ENCODE measurements at regions of chr10 and their contacts with region 1.

Region 1: GRCh38 chr10:106711313-106711906 is 453.1 kb downstream of the SORCS1 start:
- DNase-seq: no peak
- ATAC-seq: peak; percentile 57
- H3K4me3 ChIP-seq: no peak overlapping the region
- H3K27ac ChIP-seq: no peak overlapping the region
- H3K4me1 ChIP-seq: no peaks in the 10 kb centered on the region
- H3K27me3 ChIP-seq: no peaks in the 10 kb centered on the region
- CTCF ChIP-seq: peak; percentile 62 to 87 (median 82)
- EP300 ChIP-seq: no peak
- POLR2A ChIP-seq: no peak
- RAD21 ChIP-seq: peak; percentile 73

Region 2: DNA sequence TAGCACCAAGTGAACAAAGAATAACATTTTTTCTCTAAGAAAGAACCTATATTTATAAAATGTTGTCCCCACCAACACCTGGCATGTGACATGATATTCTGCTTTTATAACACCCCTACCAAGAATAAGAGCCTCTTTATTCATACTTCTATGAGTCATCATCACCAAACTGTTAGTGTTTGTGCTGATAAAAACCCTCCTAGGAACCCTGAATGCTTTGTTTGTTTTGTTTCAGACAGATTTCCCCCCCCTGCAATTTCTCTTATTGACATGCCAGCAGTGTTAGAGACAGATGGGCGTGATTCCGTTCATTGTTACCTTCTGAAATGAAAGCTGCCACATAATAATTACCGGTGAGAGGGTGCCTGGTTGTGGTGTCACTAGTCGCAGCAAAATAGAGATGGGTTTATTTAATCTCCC is 198.0 kb before region 1 on chr10:
- CTCF ChIA-PET with region 1: no interaction called
- POLR2A ChIA-PET with region 1: no interaction called
- RAD21 ChIA-PET with region 1: no interaction called
- SMC1A ChIA-PET with region 1: no interaction called
- in situ Hi-C with region 1: no loop called
- intact Hi-C with region 1: no loop called
- DNase-seq: no peak
- ATAC-seq: no peak
- H3K4me3 ChIP-seq: no peak overlapping the region
- H3K27ac ChIP-seq: no peak overlapping the region
- H3K4me1 ChIP-seq: no peaks in the 10 kb centered on the region
- H3K27me3 ChIP-seq: no peaks in the 10 kb centered on the region; a peak in 1 of 4 replicates
- CTCF ChIP-seq: no peak
- EP300 ChIP-seq: no peak
- POLR2A ChIP-seq: no peak
- RAD21 ChIP-seq: no peak

Region 3: GRCh38 chr10:107139237-107139636 is 427.8 kb after region 1 on chr10:
- CTCF ChIA-PET with region 1: interaction called, 3 read pairs
- POLR2A ChIA-PET with region 1: no interaction called
- RAD21 ChIA-PET with region 1: no interaction called
- SMC1A ChIA-PET with region 1: no interaction called
- in situ Hi-C with region 1: no loop called
- intact Hi-C with region 1: loop called (anchors 5 kb)
- DNase-seq: no peak
- ATAC-seq: no peak
- H3K4me3 ChIP-seq: no peak overlapping the region
- H3K27ac ChIP-seq: no peak overlapping the region
- H3K4me1 ChIP-seq: no peaks in the 10 kb centered on the region
- H3K27me3 ChIP-seq: no peaks in the 10 kb centered on the region
- CTCF ChIP-seq: no peak
- EP300 ChIP-seq: no peak
- POLR2A ChIP-seq: no peak
- RAD21 ChIP-seq: no peak